Mammary epithelial cell (primary cell): ENCODE measurements at regions of chr22 and their contacts with region 1.

Region 1: DNA sequence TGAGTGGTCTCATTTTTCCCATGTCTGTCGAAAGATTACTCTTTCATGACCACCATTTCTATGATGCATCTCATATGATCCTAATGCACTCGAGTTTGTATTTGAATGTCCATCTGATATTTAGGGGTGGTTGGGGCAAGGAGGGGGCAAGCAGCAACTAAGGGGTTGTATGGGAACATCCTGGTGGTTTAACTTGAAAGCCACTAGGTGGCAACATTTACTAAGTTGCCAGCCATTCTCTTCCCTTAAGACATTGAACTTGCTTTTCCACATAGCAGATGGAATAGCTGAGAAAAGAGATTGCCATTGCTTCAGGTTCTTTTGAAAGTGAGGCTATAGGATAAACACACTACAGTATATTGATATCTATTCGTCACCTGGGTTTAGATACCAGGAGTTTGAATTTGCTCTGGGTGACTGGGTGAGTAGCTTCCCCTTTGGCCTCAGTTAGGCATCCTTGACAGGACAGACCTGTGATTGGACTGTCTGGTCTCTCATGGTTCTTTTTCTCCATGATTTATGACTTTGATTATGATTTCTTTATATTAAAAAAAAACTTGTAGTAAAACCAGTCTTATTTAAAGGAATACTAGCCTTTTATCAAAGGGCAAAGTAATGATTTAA is 32.4 kb downstream of the NF2 start:
- DNase-seq: peak; percentile 39
- H3K4me3 ChIP-seq: no peak overlapping the region
- H3K27ac ChIP-seq: no peak overlapping the region
- H3K4me1 ChIP-seq: peaks cover 3% of the 10 kb centered on the region
- H3K27me3 ChIP-seq: no peaks in the 10 kb centered on the region
- CTCF ChIP-seq: peak; percentile 56 to 76

Region 2: DNA sequence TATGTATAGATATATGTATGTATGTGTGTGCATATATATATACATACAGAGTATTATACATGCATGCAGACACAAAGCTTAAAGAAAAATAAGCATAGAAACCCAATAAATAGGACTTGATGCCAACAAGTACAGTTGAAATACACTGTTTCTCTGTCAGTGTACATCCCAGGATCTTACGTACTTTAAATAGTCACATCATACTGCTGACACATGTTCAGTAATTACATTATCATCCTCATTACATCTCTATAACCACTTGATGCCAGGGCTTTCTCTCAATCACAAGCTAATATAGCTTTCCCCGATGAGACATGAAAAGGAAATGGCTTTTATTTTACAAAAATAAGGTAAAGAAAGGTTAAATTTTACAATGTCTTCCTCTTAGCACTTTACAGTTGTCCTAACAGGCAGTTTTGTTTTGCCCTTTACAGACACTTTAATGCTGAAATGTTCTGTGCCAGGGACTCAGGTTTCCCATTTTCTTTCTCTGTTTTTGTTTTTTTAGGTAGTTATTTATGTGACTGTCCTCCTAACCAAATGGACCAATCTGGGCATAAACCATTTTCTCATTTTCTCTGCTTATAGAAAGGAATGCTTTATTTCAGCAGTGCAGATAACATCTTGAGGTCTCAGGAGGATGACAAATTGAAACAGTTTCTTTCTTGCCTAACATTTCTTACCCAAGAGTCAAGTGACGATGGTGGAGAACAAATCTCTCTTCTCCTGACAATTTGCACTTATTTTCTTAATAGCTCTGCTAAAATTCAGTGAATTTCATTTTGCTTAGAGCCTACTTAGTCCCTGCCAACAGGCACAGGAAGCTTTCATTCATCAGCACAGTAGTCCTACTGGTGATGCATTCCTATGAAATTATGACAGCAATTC is 1306.4 kb before region 1 on chr22:
- CTCF ChIA-PET with region 1: no interaction called
- dilution Hi-C with region 1: no loop called
- in situ Hi-C with region 1: no loop called
- intact Hi-C with region 1: no loop called
- DNase-seq: peak; percentile 73
- H3K4me3 ChIP-seq: no peak overlapping the region
- H3K27ac ChIP-seq: no peak overlapping the region
- H3K4me1 ChIP-seq: peaks cover 9% of the 10 kb centered on the region
- H3K27me3 ChIP-seq: no peaks in the 10 kb centered on the region
- CTCF ChIP-seq: no peak

Region 3: GRCh38 chr22:29689880-29690213 is 54.0 kb after region 1 on chr22:
- CTCF ChIA-PET with region 1: no interaction called
- dilution Hi-C with region 1: loop called (anchors 5 kb)
- in situ Hi-C with region 1: no loop called
- intact Hi-C with region 1: no loop called
- DNase-seq: peak; percentile 23
- H3K4me3 ChIP-seq: no peak overlapping the region
- H3K27ac ChIP-seq: no peak overlapping the region
- H3K4me1 ChIP-seq: peaks cover 10% of the 10 kb centered on the region
- H3K27me3 ChIP-seq: no peaks in the 10 kb centered on the region
- CTCF ChIP-seq: peak; percentile 59 to 81

Region 4: GRCh38 chr22:30079952-30080533 is 444.2 kb after region 1 on chr22 and contains the start of gene HORMAD2:
- CTCF ChIA-PET with region 1: interaction called, 3 read pairs
- dilution Hi-C with region 1: no loop called
- in situ Hi-C with region 1: loop called in 1 of 2 experiments (anchors 10 kb)
- intact Hi-C with region 1: no loop called
- DNase-seq: no peak
- H3K4me3 ChIP-seq: no peak within 1 kb of the TSS
- H3K27ac ChIP-seq: no peak within 1 kb of the TSS
- H3K4me1 ChIP-seq: no peaks in the 10 kb centered on the region
- H3K27me3 ChIP-seq: no peaks in the 10 kb centered on the region
- CTCF ChIP-seq: no peak
- total RNA-seq, gene HORMAD2: not detected